Left lung (tissue), 14 donors: ENCODE measurements at regions of chr17 and their contacts with region 1.

Region 1: DNA sequence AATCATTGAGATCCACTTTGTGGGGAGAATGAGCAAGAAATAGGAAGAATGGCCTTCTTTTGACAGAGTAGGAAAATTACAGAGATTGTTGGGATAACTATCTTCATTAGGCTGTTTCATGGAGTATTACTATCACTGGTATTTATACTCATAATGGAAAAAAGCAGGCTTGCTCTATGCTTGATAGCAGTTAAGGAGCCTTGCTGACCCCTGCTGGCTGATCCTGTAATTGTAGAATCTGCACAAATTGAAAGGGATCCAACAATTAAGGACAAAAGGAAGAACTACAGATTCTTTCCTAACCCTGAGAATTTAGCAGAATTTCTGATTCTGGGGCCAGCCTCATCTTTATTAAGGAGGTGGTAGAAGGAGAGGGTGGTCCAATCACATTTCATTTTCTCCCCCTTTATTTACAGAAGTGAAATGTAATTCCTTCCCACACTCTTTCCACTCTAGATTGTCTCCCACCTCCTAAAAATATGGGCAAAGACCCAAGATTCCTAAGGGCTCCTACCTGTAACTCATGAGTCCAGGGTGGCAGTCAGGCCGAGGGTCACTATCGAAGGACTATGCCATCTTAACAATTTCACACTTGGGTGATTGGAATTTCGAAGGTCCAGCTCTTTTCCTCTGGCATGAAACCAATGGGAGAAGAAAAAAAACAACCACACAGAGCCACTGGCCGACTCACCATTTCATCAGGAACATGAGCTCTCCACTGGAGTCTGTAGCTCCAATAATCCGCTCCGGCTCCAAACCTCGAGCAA is 26.3 kb downstream of the NFE2L1 start:
- DNase-seq: peak in 3 of 4 donors; percentile 66 to 80 (median 71)
- ATAC-seq: peak; percentile 97
- H3K4me3 ChIP-seq: no peak overlapping the region
- H3K27ac ChIP-seq: peak overlapping the region in 1 of 2 donors; percentile 21
- H3K4me1 ChIP-seq: no peaks in the 10 kb centered on the region
- H3K27me3 ChIP-seq: no peaks in the 10 kb centered on the region
- CTCF ChIP-seq: peak; percentile 72 to 77

Region 2: GRCh38 chr17:48024937-48025906 is 49.3 kb before region 1 on chr17:
- intact Hi-C with region 1: loop called (anchors 5 to 10 kb)
- DNase-seq: peak; percentile 94 to 100 (median 98)
- ATAC-seq: peak; percentile 89
- H3K4me3 ChIP-seq: peak overlapping the region; percentile 31 to 41
- H3K27ac ChIP-seq: peak overlapping the region; percentile 60 to 87
- H3K4me1 ChIP-seq: peaks cover 14 to 55% of the 10 kb centered on the region in 2 donors
- H3K27me3 ChIP-seq: peaks cover 0 to 36% of the 10 kb centered on the region in 2 donors
- CTCF ChIP-seq: peak; percentile 54 to 86

Region 3: DNA sequence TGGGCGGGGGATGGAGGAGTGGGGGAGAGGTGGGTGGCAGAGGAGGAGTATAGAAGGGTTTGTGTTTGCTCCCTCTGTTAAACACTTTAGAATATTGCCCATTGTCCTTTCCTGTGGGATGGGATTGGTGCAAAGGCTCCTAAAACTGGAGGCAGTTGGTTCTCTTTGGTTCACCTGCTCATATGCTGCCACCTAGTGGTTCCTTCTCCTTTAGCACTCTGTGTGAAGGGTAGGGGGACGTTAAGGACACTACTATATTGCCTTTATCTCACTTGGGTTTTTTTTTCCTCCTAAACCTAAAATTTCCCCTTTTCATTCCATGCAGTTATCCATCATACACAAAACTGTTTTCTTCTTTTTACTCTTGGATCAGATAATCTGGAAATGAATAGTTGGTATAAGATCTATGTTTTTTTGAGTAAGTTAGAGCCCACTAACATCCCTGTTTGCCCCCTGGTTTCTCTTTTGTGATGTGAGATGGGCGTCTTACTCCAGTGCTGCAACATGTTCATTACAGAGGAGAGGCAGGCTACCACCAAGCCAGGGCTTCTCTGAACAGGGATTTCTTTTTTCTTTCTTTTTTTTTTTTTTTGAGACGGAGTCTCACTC is 56.8 kb after region 1 on chr17:
- intact Hi-C with region 1: loop called in 1 of 2 experiments (anchors 10 kb)
- DNase-seq: peak in 2 of 4 donors; percentile 63 to 80
- ATAC-seq: peak; percentile 93
- H3K4me3 ChIP-seq: no peak overlapping the region
- H3K27ac ChIP-seq: no peak overlapping the region
- H3K4me1 ChIP-seq: no peaks in the 10 kb centered on the region
- H3K27me3 ChIP-seq: no peaks in the 10 kb centered on the region
- CTCF ChIP-seq: peak; percentile 82 to 87